CD14-positive monocyte (primary cell): ENCODE measurements at regions of chr7 and their contacts with region 1.

Region 1: DNA sequence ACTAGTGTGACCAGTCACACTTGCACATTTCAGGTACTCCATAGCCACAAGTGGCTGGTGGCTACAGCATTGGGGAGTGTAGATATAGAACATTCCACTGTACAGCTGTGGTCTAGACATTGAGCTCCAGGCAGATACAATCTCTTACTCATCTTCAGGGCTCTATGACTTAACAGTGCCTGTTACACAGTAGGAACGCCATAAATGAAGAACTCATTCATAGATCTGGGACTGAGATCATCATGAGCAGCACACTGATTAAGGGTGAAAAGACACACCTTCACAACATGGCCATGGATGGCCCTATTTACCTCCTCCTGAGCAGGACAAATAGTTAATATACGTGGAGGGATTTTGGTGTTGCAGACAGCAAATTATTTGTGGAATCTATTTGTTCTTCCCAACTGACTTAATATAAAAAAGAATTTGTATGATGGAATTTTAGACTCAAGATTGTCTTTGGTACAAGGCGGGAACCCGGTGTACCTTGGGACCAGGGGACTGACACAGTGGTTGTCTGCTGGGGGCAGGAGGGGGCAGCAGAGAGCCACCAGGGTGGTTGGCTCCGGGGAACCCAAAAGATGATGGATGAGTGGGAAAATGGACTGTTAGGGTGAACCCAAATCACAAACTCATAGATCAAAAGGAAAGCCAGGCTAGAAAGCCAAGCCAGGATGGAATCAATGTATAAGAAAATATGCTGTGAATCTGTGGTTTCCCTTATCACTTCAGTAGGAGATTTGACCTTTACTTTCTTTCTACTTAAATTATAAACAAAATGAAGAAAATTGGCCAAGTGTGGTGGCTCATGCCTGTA is 24.3 kb upstream of the CPA2 start:
- DNase-seq: peak; percentile 8 to 33 (median 10)
- H3K4me3 ChIP-seq: no peak overlapping the region
- H3K4me3 Mint-ChIP-seq: peak overlapping the region in 1 of 2 donors; percentile 34
- H3K27ac ChIP-seq: no peak overlapping the region
- H3K27ac Mint-ChIP-seq: peak overlapping the region in 1 of 7 donors; percentile 41
- H3K4me1 ChIP-seq: no peaks in the 10 kb centered on the region
- H3K4me1 Mint-ChIP-seq: peaks cover 16% of the 10 kb centered on the region
- H3K27me3 ChIP-seq: no peaks in the 10 kb centered on the region
- H3K27me3 Mint-ChIP-seq: peaks cover 0 to 3% (median 1%) of the 10 kb centered on the region in 3 donors
- CTCF ChIP-seq: peak; percentile 85

Region 2: GRCh38 chr7:130108809-130109208 is 133.6 kb before region 1 on chr7:
- intact Hi-C with region 1: no loop called
- DNase-seq: no peak
- H3K4me3 ChIP-seq: no peak overlapping the region
- H3K4me3 Mint-ChIP-seq: no peak overlapping the region
- H3K27ac ChIP-seq: no peak overlapping the region
- H3K27ac Mint-ChIP-seq: peak overlapping the region in 1 of 7 donors; percentile 4
- H3K4me1 ChIP-seq: no peaks in the 10 kb centered on the region
- H3K4me1 Mint-ChIP-seq: peaks cover 11% of the 10 kb centered on the region
- H3K27me3 ChIP-seq: no peaks in the 10 kb centered on the region
- H3K27me3 Mint-ChIP-seq: peaks cover 0 to 1% (median 0%) of the 10 kb centered on the region in 3 donors
- CTCF ChIP-seq: no peak

Region 3: GRCh38 chr7:130758429-130759056 is 516.1 kb after region 1 on chr7:
- intact Hi-C with region 1: loop called in 1 of 2 experiments (anchors 10 kb)
- DNase-seq: peak; percentile 43 to 54 (median 43)
- H3K4me3 ChIP-seq: no peak overlapping the region
- H3K4me3 Mint-ChIP-seq: no peak overlapping the region
- H3K27ac ChIP-seq: no peak overlapping the region
- H3K27ac Mint-ChIP-seq: no peak overlapping the region
- H3K4me1 ChIP-seq: no peaks in the 10 kb centered on the region
- H3K4me1 Mint-ChIP-seq: no peaks in the 10 kb centered on the region
- H3K27me3 ChIP-seq: peaks cover 0 to 4% of the 10 kb centered on the region in 2 donors
- H3K27me3 Mint-ChIP-seq: peaks cover 5 to 14% (median 13%) of the 10 kb centered on the region in 3 donors
- CTCF ChIP-seq: peak; percentile 84

Region 4: DNA sequence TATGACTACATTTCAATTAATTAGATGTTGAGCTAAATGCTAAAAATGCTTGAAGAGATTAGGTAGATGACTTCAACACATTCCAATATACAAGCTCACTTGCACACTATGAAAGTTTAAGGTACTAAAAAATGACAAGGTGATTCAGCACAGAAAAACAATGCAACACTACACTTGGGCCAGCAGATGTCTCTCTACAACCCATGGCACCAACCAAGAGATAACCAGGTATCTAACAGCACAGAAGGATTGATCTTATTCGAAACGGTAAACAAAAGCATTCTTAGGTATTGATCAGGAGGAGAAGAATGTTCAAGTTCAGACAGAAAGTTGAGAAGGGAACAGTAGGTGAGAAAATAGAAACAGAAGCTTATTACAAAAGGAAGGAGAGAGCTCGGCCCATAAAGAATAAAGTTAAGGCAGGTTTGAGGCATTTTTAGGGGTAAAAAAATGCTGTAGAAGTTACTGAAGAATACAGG is 739.8 kb after region 1 on chr7:
- intact Hi-C with region 1: no loop called
- DNase-seq: peak; percentile 18 to 38 (median 26)
- H3K4me3 ChIP-seq: no peak overlapping the region
- H3K4me3 Mint-ChIP-seq: no peak overlapping the region
- H3K27ac ChIP-seq: no peak overlapping the region
- H3K27ac Mint-ChIP-seq: no peak overlapping the region
- H3K4me1 ChIP-seq: no peaks in the 10 kb centered on the region
- H3K4me1 Mint-ChIP-seq: no peaks in the 10 kb centered on the region
- H3K27me3 ChIP-seq: no peaks in the 10 kb centered on the region
- H3K27me3 Mint-ChIP-seq: no peaks in the 10 kb centered on the region
- CTCF ChIP-seq: peak; percentile 73